PC-9 (cell line): ENCODE measurements at regions of chr3 and their contacts with region 1.

Region 1: DNA sequence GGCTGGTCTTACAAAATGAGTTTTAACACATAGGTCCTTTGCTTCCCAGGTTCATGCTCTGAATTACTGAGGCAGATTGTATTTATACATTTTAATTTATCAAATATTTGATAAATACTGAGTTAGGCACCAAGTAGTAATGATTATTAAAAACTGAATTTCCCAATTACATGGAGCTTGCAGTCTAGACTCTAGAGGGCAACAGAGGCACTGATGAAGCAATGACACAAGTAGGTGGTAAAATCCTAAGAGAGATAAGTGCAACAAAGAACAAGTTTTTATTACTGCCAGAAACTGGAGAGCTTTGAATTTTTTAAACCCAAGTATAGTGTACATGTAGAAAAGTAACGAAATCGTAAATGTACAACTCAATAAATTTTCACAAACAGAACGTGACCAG is 406.2 kb upstream of the RARB start:
- DNase-seq: no peak
- H3K4me3 ChIP-seq: no peak overlapping the region
- H3K27ac ChIP-seq: no peak overlapping the region
- H3K4me1 ChIP-seq: no peaks in the 10 kb centered on the region
- H3K27me3 ChIP-seq: no peaks in the 10 kb centered on the region
- CTCF ChIP-seq: peak; percentile 49

Region 2: DNA sequence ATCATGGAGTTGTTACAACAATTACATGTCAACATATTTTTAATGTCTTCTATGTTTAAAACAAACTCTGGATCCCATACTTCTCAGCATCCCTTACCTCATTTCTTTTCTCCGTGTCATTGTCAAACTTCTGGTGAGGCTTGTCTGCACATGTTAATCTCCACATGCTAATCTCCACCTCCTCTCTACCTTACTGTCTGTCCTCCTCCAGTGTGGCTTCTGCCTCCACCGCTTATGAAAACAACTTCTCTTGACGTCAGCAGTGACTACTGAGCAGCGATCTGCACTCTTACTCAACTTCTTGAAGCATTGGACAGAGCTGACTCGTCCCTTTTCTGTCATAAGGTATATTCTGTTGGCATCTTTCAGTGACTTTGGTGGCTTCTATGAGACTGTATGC is 188.9 kb before region 1 on chr3:
- CTCF ChIA-PET with region 1: no interaction called
- POLR2A ChIA-PET with region 1: no interaction called
- intact Hi-C with region 1: no loop called
- DNase-seq: no peak
- H3K4me3 ChIP-seq: no peak overlapping the region
- H3K27ac ChIP-seq: no peak overlapping the region
- H3K4me1 ChIP-seq: no peaks in the 10 kb centered on the region
- H3K27me3 ChIP-seq: peaks cover 14% of the 10 kb centered on the region; the same call in 1 of the 2 replicates
- CTCF ChIP-seq: no peak

Region 3: DNA sequence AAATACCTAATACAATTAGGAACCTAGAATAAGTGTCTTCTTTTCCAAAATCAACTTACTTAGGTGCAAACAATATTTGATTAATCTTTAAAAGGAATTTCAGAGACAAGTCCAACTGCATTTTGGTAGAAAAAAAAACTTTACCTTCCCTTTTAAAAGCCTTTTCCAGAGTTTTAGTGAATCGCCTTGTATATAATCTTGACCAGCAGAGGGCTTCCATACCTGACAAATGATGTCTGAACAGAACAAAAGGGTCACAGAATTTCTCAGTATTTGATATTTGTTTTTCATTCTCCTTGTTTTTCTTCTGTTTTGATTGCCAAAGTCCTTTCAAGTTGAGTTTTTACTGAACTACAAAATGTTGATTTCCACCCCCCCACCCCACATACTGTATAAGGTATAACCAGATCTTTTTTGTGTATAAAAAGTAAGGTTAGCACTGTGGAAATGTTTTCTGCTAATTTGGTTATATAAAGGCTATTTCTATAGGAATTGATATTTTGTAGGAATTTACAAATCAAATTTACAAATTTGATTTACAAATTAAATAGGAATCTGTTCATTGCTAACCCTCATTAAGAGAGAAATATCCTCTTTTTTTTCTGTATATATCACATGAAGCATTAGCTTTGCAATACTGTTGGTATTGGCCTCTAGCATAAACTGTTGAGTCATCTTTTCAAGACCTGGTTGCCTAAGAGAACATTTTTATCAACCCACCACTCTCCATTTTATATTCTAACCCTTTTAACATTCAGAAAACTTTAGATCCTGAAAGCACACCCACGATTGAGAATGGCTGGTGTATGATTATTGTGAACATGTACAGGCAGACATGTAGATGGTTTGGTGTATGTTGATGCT is 57.8 kb before region 1 on chr3:
- CTCF ChIA-PET with region 1: interaction called, 25 read pairs
- POLR2A ChIA-PET with region 1: no interaction called
- intact Hi-C with region 1: no loop called
- DNase-seq: no peak
- H3K4me3 ChIP-seq: no peak overlapping the region
- H3K27ac ChIP-seq: no peak overlapping the region
- H3K4me1 ChIP-seq: no peaks in the 10 kb centered on the region
- H3K27me3 ChIP-seq: no peaks in the 10 kb centered on the region
- CTCF ChIP-seq: peak; percentile 72